ENCODE measurements at regions of chr19 and their contacts with region 1.

Region 1: DNA sequence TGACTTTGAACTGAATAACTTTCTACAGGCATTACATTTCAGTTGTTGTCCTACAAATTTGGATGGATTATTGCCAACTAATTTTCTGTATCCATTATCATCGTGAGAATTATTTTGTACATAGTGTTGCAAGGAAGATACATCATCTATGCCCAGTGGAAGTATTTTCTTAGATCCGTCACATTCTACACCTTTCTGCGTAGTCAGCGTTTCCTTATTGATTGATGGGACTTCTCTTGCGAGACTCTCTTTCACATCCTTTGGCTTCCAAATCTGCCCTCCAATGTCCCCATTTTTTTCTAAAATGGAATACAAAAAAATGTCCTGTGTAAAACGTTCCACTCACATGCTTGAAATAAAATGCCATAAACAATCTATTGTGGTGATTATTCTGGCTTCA is 9.2 kb downstream of the ZIM3 start:
- DNase-seq: no peak
- H3K4me3 ChIP-seq: no peak overlapping the region
- H3K27ac ChIP-seq: no peak overlapping the region
- H3K4me1 ChIP-seq: no peaks in the 10 kb centered on the region
- H3K27me3 ChIP-seq: no peaks in the 10 kb centered on the region
- CTCF ChIP-seq: no peak

Region 2: GRCh38 chr19:57171551-57172081 is 35.8 kb after region 1 on chr19:
- CTCF ChIA-PET with region 1: no interaction called
- dilution Hi-C with region 1: loop called (anchors 5 kb)
- in situ Hi-C with region 1: no loop called
- intact Hi-C with region 1: no loop called
- DNase-seq: peak; percentile 22
- H3K4me3 ChIP-seq: peak overlapping the region in 1 of 3 experiments; percentile 42
- H3K27ac ChIP-seq: no peak overlapping the region
- H3K4me1 ChIP-seq: no peaks in the 10 kb centered on the region
- H3K27me3 ChIP-seq: no peaks in the 10 kb centered on the region
- CTCF ChIP-seq: no peak

Measured in mammary epithelial cell (primary cell).